BJ (cell line): ENCODE measurements at regions of chr12 and their contacts with region 1.

Region 1: GRCh38 chr12:57088459-57089248 is at the start of gene NAB2:
- DNase-seq: peak; percentile 80
- H3K4me3 ChIP-seq: peak within 1 kb of the TSS; percentile 96
- H3K27me3 ChIP-seq: no peaks in the 10 kb centered on the region
- CTCF ChIP-seq: no peak
- polyA plus RNA-seq, gene NAB2: 41.7 and 50.2 TPM in 2 replicates

Region 2: GRCh38 chr12:57101844-57102695 is 13.4 kb after region 1 on chr12:
- CTCF ChIA-PET with region 1: interaction called, 190 read pairs
- POLR2A ChIA-PET with region 1: interaction called, 21 read pairs
- DNase-seq: no peak
- H3K4me3 ChIP-seq: no peak overlapping the region
- H3K27me3 ChIP-seq: no peaks in the 10 kb centered on the region
- CTCF ChIP-seq: no peak

Region 3: DNA sequence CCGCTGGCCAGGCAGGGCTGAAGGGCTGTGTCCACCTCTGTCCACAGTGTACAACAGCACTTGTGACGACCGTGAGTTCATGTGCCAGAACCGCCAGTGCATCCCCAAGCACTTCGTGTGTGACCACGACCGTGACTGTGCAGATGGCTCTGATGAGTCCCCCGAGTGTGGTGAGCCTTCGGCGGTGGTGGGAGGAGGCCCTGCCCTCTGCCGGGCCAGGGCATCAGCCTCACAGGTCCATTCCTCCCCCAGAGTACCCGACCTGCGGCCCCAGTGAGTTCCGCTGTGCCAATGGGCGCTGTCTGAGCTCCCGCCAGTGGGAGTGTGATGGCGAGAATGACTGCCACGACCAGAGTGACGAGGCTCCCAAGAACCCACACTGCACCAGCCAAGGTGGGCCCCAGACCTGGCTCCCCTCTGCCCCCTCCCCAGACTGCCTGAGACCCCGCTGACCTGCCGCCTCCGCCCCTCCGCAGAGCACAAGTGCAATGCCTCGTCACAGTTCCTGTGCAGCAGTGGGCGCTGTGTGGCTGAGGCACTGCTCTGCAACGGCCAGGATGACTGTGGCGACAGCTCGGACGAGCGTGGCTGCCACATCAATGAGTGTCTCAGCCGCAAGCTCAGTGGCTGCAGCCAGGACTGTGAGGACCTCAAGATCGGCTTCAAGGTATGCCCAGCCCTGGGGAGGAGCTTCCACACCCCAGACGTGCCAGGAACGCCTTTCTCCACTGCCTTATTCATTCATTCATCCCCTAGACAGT is 107.1 kb after region 1 on chr12:
- CTCF ChIA-PET with region 1: no interaction called
- POLR2A ChIA-PET with region 1: no interaction called
- DNase-seq: no peak
- H3K4me3 ChIP-seq: no peak overlapping the region
- H3K27me3 ChIP-seq: no peaks in the 10 kb centered on the region
- CTCF ChIP-seq: no peak